Posterior cingulate gyrus (tissue), 11 donors: ENCODE measurements at regions of chr1 and their contacts with region 1.

Region 1: DNA sequence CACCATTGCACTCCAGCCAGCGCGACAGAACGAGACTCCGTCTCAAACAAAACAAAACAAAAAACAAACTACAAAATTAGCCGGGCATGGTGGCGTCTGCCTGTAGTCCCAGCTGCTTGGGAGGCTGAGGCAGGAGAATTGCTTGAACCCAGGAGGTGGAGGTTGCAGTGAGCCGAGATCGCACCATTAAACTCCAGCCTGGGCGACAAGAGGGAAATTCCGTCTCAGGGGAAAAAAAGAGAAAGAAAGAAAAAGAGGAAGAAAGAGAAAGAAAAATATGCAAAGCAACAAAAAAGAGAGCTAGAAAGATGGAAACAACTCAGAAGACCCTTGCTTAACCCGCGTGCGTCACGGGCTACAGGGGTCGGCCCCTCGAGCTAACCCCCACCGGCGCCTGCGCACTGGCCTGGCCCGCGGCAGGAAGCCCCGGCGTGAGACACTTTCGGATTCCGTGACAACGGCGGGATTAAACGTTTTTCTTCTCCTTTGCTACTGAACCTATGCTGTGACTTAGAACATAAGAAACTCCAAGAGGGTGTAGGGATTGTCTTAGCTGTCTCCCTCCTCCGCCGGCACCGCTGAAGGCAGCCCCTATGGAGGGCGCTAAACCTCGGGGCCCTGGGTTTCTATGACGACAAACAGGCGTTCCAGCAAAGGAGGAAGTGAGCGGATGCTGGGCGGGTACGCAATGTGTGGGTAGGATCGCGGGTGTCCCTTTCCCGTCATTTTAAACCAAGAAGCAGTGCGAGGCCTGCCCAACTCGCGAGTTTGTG is at the start of gene AXDND1:
- DNase-seq: peak; percentile 55 to 95 (median 79)

Region 2: DNA sequence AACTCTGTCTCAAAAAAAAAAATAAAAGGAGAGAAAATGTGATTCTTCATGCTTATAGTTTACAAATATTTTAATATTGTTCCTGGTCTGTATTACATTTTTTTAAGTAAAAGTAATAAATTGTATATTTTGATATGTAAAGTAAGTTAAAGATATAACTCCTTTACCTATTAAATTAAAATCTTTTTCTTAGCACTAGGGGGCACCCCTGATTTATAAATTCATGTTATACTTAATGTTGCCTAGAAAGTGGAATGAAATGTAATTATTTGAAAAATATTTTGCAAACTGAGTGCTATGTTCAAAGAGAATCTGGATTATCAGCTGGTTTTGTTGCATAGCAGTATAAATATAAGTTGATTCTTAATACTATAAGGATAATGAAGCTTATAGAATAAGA is 591.2 kb before region 1 on chr1:
- intact Hi-C with region 1: loop called (anchors 5 kb)
- DNase-seq: no peak

Region 3: DNA sequence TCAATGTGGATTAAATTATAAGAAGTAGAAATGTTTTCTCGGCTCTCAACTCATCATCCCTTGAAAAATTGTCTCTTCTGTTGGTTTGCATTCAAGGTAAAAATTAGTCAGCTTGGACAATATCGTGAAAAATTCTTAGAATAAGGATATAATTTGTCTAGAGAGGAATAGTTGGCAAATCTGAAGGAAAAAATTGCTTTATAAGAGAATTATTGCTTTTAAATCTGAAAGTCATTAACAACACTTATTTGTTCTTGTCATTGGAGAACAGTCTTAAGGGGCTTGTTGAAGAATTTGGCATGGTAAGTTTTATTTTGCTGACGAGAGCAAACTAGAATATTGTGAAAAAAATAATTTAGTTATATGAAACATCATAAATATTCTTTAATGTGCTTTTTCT is 521.1 kb before region 1 on chr1:
- intact Hi-C with region 1: no loop called
- DNase-seq: no peak

Region 4: GRCh38 chr1:179081687-179082332 is 283.7 kb before region 1 on chr1 and contains the start of gene TOR3A:
- intact Hi-C with region 1: loop called (anchors 1 kb)
- DNase-seq: peak; percentile 89 to 99 (median 92)

Region 5: GRCh38 chr1:179251675-179252074 is 113.8 kb before region 1 on chr1:
- intact Hi-C with region 1: loop called (anchors 5 kb)
- DNase-seq: no peak

Region 6: GRCh38 chr1:179293340-179294327 is 71.9 kb before region 1 on chr1 and contains the start of gene SOAT1:
- intact Hi-C with region 1: loop called (anchors 5 kb)
- DNase-seq: peak; percentile 89 to 99 (median 95)

Region 7: GRCh38 chr1:179305450-179305849 is 60.1 kb before region 1 on chr1:
- intact Hi-C with region 1: no loop called
- DNase-seq: no peak

Region 8: GRCh38 chr1:179447489-179447888 is 82.0 kb after region 1 on chr1:
- intact Hi-C with region 1: no loop called
- DNase-seq: no peak

Region 9: DNA sequence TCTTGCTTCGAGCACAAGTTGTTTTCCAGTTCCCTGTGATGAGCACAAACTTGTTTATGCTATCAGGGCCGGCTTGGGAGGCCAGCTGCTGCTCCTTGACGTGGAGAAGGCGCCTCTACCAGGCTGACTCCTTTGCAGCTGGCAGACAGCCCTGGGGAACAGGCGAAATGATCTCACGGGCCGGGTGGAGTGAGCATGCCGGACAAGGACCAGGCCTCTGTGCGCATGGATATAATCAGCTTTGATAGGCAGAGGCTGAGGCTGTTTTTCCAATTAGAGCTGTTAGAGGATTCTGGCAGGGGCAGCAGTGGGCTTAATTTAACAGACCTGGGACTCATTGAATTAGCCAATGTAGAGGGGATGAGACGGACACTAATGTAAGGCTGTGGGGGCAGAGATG is 416.5 kb after region 1 on chr1:
- intact Hi-C with region 1: no loop called
- DNase-seq: no peak